PC-9 (cell line): ENCODE measurements at regions of chr20 and their contacts with region 1.

Region 1: GRCh38 chr20:5369629-5370542 is 53.1 kb upstream of the PROKR2 start:
- DNase-seq: no peak
- H3K4me3 ChIP-seq: no peak overlapping the region
- H3K27ac ChIP-seq: no peak overlapping the region
- H3K4me1 ChIP-seq: 0 out of 2 replicates have a peak, but pooled peaks cover 3% of the 10 kb centered on the region
- H3K27me3 ChIP-seq: peaks cover 47% of the 10 kb centered on the region; the same call in 1 of the 2 replicates
- CTCF ChIP-seq: no peak

Region 2: DNA sequence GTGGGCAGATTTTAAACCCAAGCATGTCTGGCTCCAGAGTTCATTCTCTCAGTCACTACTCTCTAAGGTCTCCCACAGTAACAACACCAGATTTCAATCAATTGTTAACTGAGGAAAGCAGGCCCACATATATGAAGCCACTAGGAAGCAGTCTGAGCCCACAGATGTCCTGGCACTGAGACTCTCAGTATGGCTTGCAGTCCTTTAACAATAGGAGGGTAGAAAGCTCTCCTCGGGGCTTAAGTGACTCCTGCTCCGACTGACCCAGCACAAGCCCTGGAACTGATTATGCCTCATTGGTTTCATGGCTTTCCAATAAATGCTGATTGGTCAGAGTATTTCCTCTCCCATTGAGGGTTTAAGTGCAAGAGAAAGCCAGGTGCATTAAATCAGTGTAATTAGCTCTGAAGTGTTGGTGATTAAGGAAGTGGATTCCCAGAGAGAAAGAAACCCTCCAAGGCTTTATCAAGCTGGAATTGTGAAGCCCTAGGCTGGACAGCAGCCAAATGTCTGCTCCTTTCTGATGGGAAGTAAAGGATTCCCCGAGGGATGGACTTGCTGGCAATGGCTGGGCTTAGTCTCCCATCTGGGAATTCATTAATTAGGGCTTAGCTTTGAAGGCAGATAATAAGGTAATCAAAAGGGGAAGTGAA is 23.5 kb after region 1 on chr20:
- CTCF ChIA-PET with region 1: interaction called, 14 read pairs
- POLR2A ChIA-PET with region 1: no interaction called
- intact Hi-C with region 1: no loop called
- DNase-seq: no peak
- H3K4me3 ChIP-seq: no peak overlapping the region
- H3K27ac ChIP-seq: no peak overlapping the region
- H3K4me1 ChIP-seq: no peaks in the 10 kb centered on the region
- H3K27me3 ChIP-seq: peaks cover 39% of the 10 kb centered on the region
- CTCF ChIP-seq: no peak